ENCODE measurements at regions of chr10 and their contacts with region 1.

Region 1: GRCh38 chr10:97640174-97640867 is at the start of gene PI4K2A:
- DNase-seq: peak; percentile 89 to 99 (median 98)
- ATAC-seq: peak; percentile 98
- H3K4me3 ChIP-seq: peak within 1 kb of the TSS; percentile 82
- H3K4me3 Mint-ChIP-seq: peak within 1 kb of the TSS; percentile 64 to 99 (median 94)
- H3K27ac ChIP-seq: peak within 1 kb of the TSS; percentile 70
- H3K27ac Mint-ChIP-seq: peak within 1 kb of the TSS; percentile 69 to 94 (median 89)
- H3K4me1 ChIP-seq: peaks cover 4 to 15% of the 10 kb centered on the region in 2 donors
- H3K4me1 Mint-ChIP-seq: peaks cover 10 to 34% (median 26%) of the 10 kb centered on the region in 7 donors
- H3K27me3 ChIP-seq: no peaks in the 10 kb centered on the region
- H3K27me3 Mint-ChIP-seq: no peaks in the 10 kb centered on the region
- total RNA-seq, gene PI4K2A: 9.0 to 33.8 (median 11.0) TPM

Region 2: DNA sequence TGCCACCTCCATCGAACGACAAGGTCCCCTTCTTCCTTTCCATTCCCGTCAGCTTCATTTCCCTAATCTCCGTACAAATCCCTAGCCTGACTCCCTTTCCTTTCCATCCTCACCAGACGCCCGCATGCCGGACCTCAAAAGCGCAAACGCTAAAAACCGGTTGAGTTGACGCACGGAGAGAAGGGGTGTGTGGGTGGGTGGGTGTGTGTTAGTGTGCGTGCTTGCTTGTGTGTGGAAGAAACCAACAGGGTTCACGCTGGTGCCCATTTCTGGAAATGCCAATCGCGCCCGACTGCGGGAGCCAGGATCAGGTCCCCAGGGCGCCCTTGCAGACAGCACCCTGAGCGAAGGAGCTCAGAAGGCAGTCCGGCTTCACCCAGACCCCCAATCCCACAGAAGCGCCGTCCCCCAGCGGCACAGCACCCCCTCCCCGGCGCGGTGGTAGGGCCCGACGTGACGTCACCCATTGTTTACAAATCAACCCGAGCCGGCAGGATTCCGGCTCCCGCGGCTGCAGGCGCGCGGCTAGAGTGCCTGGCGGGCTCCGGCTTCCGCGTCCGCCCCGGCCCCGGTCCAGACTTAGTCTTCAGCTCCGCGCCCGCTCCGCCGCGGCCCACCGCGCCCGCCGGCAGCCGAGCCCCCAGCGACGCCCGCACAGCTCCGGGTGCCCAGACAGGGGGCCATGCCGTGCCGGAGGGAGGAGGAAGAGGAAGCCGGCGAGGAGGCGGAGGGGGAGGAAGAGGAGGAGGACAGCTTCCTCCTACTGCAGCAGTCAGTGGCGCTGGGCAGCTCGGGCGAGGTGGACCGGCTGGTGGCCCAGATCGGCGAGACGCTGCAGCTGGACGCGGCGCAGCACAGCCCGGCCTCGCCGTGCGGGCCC is 321.3 kb before region 1 on chr10 and contains the start of gene FRAT1:
- CTCF ChIA-PET with region 1: no interaction called
- POLR2A ChIA-PET with region 1: no interaction called
- intact Hi-C with region 1: loop called in 1 of 2 experiments (anchors 2 kb)
- DNase-seq: peak; percentile 87 to 99 (median 95)
- ATAC-seq: peak; percentile 87
- H3K4me3 ChIP-seq: peak within 1 kb of the TSS; percentile 92
- H3K4me3 Mint-ChIP-seq: peak within 1 kb of the TSS; percentile 92 to 99 (median 94)
- H3K27ac ChIP-seq: peak within 1 kb of the TSS; percentile 100
- H3K27ac Mint-ChIP-seq: peak within 1 kb of the TSS; percentile 99 to 100 (median 99)
- H3K4me1 ChIP-seq: peaks cover 12 to 18% of the 10 kb centered on the region in 2 donors
- H3K4me1 Mint-ChIP-seq: peaks cover 20 to 40% (median 29%) of the 10 kb centered on the region in 7 donors
- H3K27me3 ChIP-seq: no peaks in the 10 kb centered on the region
- H3K27me3 Mint-ChIP-seq: peaks cover 0 to 20% (median 0%) of the 10 kb centered on the region in 5 donors
- total RNA-seq, gene FRAT1: 5.3 to 41.0 (median 21.8) TPM

Region 3: DNA sequence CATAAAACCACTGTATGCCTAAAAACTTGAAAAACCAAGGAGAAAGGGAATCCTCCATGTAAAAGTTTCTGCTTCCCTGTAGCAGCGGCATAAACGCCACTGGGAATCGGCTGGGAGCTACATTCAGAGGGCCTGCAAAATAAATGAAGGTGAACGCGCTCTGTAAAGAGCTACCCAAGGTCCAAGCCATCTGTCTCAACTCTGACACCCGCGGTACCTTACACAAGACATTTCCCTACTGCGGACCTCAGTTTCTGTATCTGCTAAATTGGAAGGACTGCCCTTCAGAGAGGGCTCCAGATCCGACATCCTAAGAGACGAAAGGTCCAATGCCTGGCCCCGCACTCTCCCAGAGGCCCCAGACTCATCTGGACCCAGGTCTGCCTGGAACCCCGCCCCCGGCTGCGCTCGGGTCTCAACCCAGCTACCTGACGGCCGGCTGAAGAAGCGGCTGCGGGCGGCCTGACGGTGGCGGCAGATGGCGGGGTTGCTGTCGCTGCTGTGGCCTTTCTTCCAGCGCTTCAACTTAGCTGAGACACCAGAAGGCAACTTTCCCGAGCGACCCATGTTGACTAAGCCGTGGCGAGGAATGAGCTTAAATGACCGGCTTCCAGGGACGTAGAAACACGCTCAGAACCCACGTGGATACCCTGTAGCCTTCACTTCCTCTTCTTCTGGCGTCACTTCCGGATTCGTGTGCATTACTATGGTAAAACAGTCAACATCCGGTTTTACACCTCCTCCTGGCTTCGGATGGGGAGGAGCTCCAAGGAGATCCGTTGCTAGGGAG is 239.5 kb before region 1 on chr10 and contains the start of gene RRP12:
- CTCF ChIA-PET with region 1: no interaction called
- POLR2A ChIA-PET with region 1: interaction called, 3 read pairs
- intact Hi-C with region 1: loop called in 1 of 2 experiments (anchors 1 kb)
- DNase-seq: peak; percentile 47 to 96 (median 92)
- ATAC-seq: peak; percentile 96
- H3K4me3 ChIP-seq: peak within 1 kb of the TSS; percentile 73
- H3K4me3 Mint-ChIP-seq: peak within 1 kb of the TSS; percentile 90 to 97 (median 95)
- H3K27ac ChIP-seq: peak within 1 kb of the TSS; percentile 90
- H3K27ac Mint-ChIP-seq: peak within 1 kb of the TSS; percentile 81 to 99 (median 98)
- H3K4me1 ChIP-seq: peaks cover 13 to 15% of the 10 kb centered on the region in 2 donors
- H3K4me1 Mint-ChIP-seq: peaks cover 6 to 22% (median 17%) of the 10 kb centered on the region in 7 donors
- H3K27me3 ChIP-seq: no peaks in the 10 kb centered on the region
- H3K27me3 Mint-ChIP-seq: no peaks in the 10 kb centered on the region
- total RNA-seq, gene RRP12: 22.0 to 197 (median 32.3) TPM

Region 4: DNA sequence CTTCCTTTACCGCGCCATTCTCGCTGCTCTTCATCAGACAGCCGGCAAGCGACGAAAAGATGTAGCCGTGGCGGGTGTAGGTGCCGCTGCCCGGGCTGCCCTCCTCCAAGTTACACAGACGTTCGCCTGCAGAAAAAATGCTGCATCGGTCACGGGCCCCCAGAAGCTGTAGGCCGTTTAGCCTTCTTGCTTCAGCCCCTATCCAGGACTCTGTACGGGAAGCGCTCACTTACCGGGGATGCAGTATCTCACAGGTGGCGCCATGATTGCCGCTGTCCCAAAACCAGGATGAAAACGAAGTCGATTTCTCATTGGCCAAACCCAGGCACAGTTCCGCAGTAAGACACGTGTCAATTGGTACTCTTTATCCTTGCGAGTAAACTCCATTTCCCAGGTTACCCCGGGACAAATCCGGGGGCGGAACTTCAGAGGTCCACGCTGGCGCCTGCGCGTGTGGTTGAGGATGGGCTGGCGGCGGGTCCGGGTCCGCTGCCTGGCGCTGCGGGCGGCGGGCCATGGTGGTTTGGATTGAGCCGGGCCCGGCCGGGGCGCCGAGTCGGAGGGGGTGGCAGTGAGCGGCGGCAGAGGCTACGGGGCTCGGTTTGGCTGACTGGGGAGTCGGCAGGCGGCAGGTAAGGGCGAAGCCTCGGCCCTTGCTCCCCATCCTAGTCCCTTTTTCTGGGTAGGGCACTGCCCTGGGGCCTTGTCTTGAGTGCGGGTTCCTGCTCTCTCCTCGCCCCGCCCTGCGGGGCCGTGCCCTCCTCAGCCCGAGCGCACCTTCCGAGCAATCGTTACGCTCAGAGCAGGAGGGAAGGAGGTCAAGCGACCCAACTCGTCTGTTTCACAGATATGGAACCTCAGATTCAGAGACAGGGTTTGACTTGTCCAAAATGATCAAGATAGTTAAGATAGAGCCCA is 194.3 kb before region 1 on chr10 and contains the starts of genes EXOSC1 and ZDHHC16:
- CTCF ChIA-PET with region 1: no interaction called
- POLR2A ChIA-PET with region 1: no interaction called
- intact Hi-C with region 1: loop called (anchors 1 kb)
- DNase-seq: peak; percentile 67 to 93 (median 89)
- ATAC-seq: peak; percentile 99
- H3K4me3 ChIP-seq: peak within 1 kb of the TSS; percentile 98
- H3K4me3 Mint-ChIP-seq: peak within 1 kb of the TSS; percentile 89 to 99 (median 98)
- H3K27ac ChIP-seq: peak within 1 kb of the TSS; percentile 80
- H3K27ac Mint-ChIP-seq: peak within 1 kb of the TSS; percentile 86 to 97 (median 93)
- H3K4me1 ChIP-seq: peaks cover 19 to 29% of the 10 kb centered on the region in 2 donors
- H3K4me1 Mint-ChIP-seq: peaks cover 32 to 69% (median 44%) of the 10 kb centered on the region in 7 donors
- H3K27me3 ChIP-seq: no peaks in the 10 kb centered on the region
- H3K27me3 Mint-ChIP-seq: no peaks in the 10 kb centered on the region
- total RNA-seq, gene EXOSC1: 32.6 to 65.4 (median 53.2) TPM
- total RNA-seq, gene ZDHHC16: 13.2 to 38.8 (median 26.8) TPM

Region 5: DNA sequence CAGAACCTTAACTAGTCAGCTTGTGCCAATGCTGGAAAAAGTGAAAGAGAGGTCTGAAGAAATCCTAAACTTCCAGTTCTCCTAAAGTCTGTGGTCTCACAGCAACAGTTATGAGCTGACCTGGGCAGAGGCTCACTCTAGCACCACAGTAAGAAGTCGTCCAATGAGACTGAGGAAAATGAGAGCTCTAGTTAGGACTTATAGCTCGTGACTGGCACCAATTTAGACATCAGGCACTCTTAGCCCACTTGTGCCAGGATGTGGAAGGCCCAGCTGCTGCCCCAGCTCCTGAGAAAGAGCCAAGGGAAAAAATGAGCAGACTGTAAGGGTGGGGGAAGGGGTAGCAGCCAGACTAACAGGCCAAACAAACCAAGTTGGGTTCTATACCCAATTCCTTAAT is 149.7 kb before region 1 on chr10:
- CTCF ChIA-PET with region 1: no interaction called
- POLR2A ChIA-PET with region 1: no interaction called
- intact Hi-C with region 1: no loop called
- DNase-seq: no peak
- ATAC-seq: no peak
- H3K4me3 ChIP-seq: no peak overlapping the region
- H3K4me3 Mint-ChIP-seq: peak overlapping the region in 5 of 10 donors; percentile 6 to 56 (median 27)
- H3K27ac ChIP-seq: no peak overlapping the region
- H3K27ac Mint-ChIP-seq: peak overlapping the region in 6 of 9 donors; percentile 17 to 70 (median 55)
- H3K4me1 ChIP-seq: peaks cover 4 to 25% of the 10 kb centered on the region in 2 donors
- H3K4me1 Mint-ChIP-seq: peaks cover 28 to 72% (median 57%) of the 10 kb centered on the region in 7 donors
- H3K27me3 ChIP-seq: no peaks in the 10 kb centered on the region
- H3K27me3 Mint-ChIP-seq: no peaks in the 10 kb centered on the region

Region 6: DNA sequence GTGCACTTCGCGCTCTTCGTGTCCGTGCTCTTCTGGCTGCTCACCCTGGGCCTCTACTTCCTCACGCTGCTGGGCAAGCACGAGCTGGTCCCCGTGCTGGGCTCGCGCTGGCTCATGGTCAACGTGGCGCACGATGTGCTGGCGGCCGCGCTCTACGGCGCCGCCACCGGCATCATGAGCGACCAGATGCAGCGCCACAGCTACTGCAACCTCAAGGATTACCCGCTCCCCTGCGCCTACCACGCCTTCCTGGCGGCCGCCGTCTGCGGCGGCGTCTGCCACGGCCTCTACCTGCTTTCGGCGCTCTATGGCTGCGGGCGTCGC is 73.7 kb after region 1 on chr10:
- CTCF ChIA-PET with region 1: interaction called, 3 read pairs
- POLR2A ChIA-PET with region 1: no interaction called
- intact Hi-C with region 1: loop called in 1 of 2 experiments (anchors 1 kb)
- DNase-seq: peak in 8 of 9 donors; percentile 28 to 67 (median 40)
- ATAC-seq: peak; percentile 83
- H3K4me3 ChIP-seq: peak overlapping the region; percentile 69
- H3K4me3 Mint-ChIP-seq: peak overlapping the region; percentile 95 to 100 (median 99)
- H3K27ac ChIP-seq: no peak overlapping the region
- H3K27ac Mint-ChIP-seq: peak overlapping the region in 7 of 9 donors; percentile 44 to 95 (median 80)
- H3K4me1 ChIP-seq: peaks cover 5 to 6% of the 10 kb centered on the region in 2 donors
- H3K4me1 Mint-ChIP-seq: peaks cover 5 to 21% (median 11%) of the 10 kb centered on the region in 7 donors
- H3K27me3 ChIP-seq: no peaks in the 10 kb centered on the region
- H3K27me3 Mint-ChIP-seq: peaks cover 14 to 43% (median 19%) of the 10 kb centered on the region in 5 donors

Region 7: DNA sequence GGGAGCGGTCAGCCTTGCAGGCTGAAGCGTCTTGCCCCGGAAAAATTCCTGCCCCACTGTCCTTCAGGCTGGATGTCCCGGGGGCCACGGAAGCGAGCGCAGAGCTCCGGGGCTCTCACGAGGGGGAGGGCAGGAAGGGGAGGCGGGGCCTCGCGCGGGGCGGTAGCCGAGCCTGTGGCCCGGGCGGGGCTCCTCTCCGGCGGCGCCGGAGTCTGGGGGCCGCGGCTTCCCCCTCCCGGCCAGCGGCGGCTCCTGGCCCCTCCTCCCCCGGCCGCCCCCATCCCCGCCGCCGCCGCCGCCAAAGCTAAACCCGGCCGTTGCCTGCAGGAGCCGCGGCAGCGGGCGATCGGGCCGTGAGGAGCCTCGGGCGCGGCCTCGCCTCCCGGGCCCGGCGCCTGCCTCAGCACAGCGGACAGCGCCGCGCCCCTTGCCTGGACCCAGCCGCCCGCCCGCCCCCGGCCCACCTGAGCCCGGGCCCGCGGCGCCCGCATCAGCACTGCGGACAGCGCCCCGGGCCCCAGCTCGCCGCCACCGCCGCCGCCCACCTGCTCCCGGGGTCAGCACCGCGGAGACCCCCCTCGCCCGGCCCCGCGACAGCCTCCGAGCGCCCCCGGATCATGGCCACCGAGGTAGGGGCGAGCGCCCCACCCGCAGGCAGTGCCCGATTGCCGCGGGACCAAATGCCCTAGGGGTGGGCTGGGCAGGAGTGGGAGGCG is 209.5 kb after region 1 on chr10 and contains the start of gene GOLGA7B:
- CTCF ChIA-PET with region 1: no interaction called
- POLR2A ChIA-PET with region 1: no interaction called
- intact Hi-C with region 1: loop called in 1 of 2 experiments (anchors 1 kb)
- DNase-seq: peak; percentile 43 to 70 (median 66)
- ATAC-seq: peak; percentile 87
- H3K4me3 ChIP-seq: peak within 1 kb of the TSS; percentile 74
- H3K4me3 Mint-ChIP-seq: peak within 1 kb of the TSS; percentile 84 to 94 (median 90)
- H3K27ac ChIP-seq: peak within 1 kb of the TSS; percentile 61
- H3K27ac Mint-ChIP-seq: peak within 1 kb of the TSS; percentile 70 to 93 (median 87)
- H3K4me1 ChIP-seq: peaks cover 25 to 32% of the 10 kb centered on the region in 2 donors
- H3K4me1 Mint-ChIP-seq: peaks cover 21 to 49% (median 37%) of the 10 kb centered on the region in 7 donors
- H3K27me3 ChIP-seq: no peaks in the 10 kb centered on the region
- H3K27me3 Mint-ChIP-seq: peaks cover 0 to 4% (median 0%) of the 10 kb centered on the region in 5 donors
- total RNA-seq, gene GOLGA7B: 5.8 to 8.5 (median 6.5) TPM

Measured in naive thymus-derived CD4-positive, alpha-beta T cell (primary cell).